ENCODE measurements at regions of chr10 and their contacts with region 1.

Region 1: GRCh38 chr10:133394064-133394663 is at the start of gene MTG1:
- DNase-seq: peak; percentile 96
- H3K4me3 Mint-ChIP-seq: peak within 1 kb of the TSS; percentile 99
- H3K27ac Mint-ChIP-seq: peak within 1 kb of the TSS; percentile 98
- H3K4me1 Mint-ChIP-seq: peaks cover 28% of the 10 kb centered on the region
- H3K27me3 Mint-ChIP-seq: no peaks in the 10 kb centered on the region
- total RNA-seq, gene MTG1: 64.9 and 67.9 TPM in 2 replicates

Region 2: GRCh38 chr10:133139551-133140065 is 254.6 kb before region 1 on chr10:
- intact Hi-C with region 1: no loop called
- DNase-seq: no peak
- H3K4me3 Mint-ChIP-seq: no peak overlapping the region
- H3K27ac Mint-ChIP-seq: no peak overlapping the region
- H3K4me1 Mint-ChIP-seq: peaks cover 8% of the 10 kb centered on the region
- H3K27me3 Mint-ChIP-seq: no peaks in the 10 kb centered on the region

Region 3: GRCh38 chr10:133261726-133262325 is 132.3 kb before region 1 on chr10:
- intact Hi-C with region 1: loop called (anchors 1 kb)
- DNase-seq: peak; percentile 76
- H3K4me3 Mint-ChIP-seq: peak overlapping the region; percentile 65
- H3K27ac Mint-ChIP-seq: peak overlapping the region; percentile 48
- H3K4me1 Mint-ChIP-seq: peaks cover 56% of the 10 kb centered on the region
- H3K27me3 Mint-ChIP-seq: peaks cover 5% of the 10 kb centered on the region

Region 4: GRCh38 chr10:133278577-133279265 is 115.4 kb before region 1 on chr10:
- intact Hi-C with region 1: loop called (anchors 2 kb)
- DNase-seq: peak; percentile 63
- H3K4me3 Mint-ChIP-seq: peak overlapping the region; percentile 87
- H3K27ac Mint-ChIP-seq: peak overlapping the region; percentile 86
- H3K4me1 Mint-ChIP-seq: peaks cover 14% of the 10 kb centered on the region
- H3K27me3 Mint-ChIP-seq: no peaks in the 10 kb centered on the region

Region 5: GRCh38 chr10:133329491-133330202 is 64.5 kb before region 1 on chr10:
- intact Hi-C with region 1: loop called (anchors 2 kb)
- DNase-seq: peak; percentile 77
- H3K4me3 Mint-ChIP-seq: peak overlapping the region; percentile 64
- H3K27ac Mint-ChIP-seq: no peak overlapping the region
- H3K4me1 Mint-ChIP-seq: peaks cover 3% of the 10 kb centered on the region
- H3K27me3 Mint-ChIP-seq: peaks cover 72% of the 10 kb centered on the region

Region 6: DNA sequence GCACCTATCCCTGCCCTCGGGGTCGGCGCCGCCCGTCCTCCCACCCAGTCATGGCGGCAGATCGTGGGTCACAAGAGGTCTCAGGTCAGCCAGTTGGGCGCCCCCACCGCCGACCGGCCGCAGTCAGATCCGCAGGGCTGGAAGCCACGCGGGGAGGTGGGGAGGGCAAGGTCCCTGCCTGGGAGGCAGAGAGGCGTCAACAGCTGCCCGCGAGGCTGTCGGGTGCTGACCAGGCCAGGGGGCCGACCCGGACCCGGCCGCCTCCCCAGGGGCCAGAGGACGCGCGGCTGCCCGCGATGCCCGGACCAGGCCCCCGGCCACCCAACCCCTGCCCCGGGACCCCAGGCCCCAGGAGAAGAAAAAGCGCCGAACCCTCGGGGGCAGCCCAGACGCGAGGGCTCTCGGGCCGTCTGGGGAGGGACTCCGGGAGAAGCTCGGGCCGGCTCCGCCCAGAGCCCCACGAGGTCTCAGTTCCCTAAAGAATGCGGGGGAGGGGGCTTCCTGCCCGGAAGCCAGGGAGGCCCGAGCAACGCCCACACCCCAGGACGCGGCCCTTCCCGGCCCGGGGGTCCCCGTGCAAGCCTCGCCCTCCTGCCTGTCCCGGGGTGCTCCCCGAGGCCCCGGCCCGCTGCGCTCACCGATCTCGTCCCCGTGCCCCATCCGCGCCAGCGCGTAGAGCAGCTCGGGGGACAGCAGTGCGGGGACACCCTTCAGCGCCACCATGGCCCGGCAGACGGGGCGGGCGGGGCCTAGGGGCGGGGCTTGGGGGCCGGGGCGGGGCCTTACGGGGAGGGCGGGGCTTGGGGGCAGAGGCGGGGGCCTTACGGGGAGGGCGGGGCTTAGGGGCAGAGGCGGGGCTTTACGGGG is 36.6 kb before region 1 on chr10 and contains the start of gene FUOM:
- intact Hi-C with region 1: loop called (anchors 1 kb)
- DNase-seq: peak; percentile 57
- H3K4me3 Mint-ChIP-seq: peak within 1 kb of the TSS; percentile 77
- H3K27ac Mint-ChIP-seq: peak within 1 kb of the TSS; percentile 48
- H3K4me1 Mint-ChIP-seq: no peaks in the 10 kb centered on the region
- H3K27me3 Mint-ChIP-seq: no peaks in the 10 kb centered on the region
- total RNA-seq, gene FUOM: 45.4 and 51.8 TPM in 2 replicates

Region 7: GRCh38 chr10:133373104-133373624 is 21.0 kb before region 1 on chr10 and contains the start of gene ECHS1:
- intact Hi-C with region 1: loop called (anchors 1 kb)
- DNase-seq: peak; percentile 95
- H3K4me3 Mint-ChIP-seq: peak within 1 kb of the TSS; percentile 91
- H3K27ac Mint-ChIP-seq: peak within 1 kb of the TSS; percentile 84
- H3K4me1 Mint-ChIP-seq: peaks cover 5% of the 10 kb centered on the region
- H3K27me3 Mint-ChIP-seq: peaks cover 16% of the 10 kb centered on the region
- total RNA-seq, gene ECHS1: 69.3 and 69.6 TPM in 2 replicates

Region 8: DNA sequence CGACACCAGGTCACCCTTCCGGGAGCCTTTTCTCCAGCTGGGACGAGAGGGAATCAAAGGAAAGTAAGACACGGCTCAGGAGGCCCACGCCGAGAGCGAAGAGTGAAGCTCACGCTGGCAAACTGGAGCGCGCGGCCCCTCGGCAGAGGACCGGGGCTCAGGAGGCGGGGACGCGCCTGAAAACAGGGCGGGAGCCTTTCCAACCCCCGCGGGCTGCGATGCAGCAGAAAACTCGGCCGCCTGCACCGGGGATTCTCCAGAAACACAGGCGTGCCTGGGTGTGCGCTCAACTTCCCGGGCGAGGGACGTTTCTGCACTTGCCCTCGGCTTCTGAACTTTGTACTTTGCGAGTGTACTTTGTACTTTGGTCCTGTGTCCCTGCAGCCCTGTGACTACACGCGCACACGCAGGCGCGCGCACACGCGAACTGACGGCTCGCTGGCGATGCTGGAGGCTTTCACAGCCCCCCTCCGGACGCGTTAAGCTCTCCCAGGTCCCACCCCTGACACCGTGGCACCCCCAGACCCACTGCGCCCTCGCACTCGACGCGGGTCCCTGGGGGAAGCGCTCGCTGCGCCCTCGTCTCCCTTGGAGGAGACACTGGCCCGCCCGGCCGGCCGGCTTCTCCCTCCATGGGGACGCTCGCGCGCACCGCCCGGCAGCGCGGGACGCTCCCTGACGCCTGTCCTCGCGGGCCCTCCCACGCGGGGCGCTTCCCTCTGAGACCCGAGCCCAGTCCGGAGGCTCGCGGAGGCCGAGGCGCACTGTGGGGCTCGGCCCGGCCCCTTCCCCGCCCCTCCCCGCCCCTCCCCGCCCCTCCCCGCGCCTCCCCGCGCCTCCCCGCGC is 15.7 kb before region 1 on chr10:
- intact Hi-C with region 1: loop called (anchors 1 kb)
- DNase-seq: peak; percentile 51
- H3K4me3 Mint-ChIP-seq: peak overlapping the region; percentile 79
- H3K27ac Mint-ChIP-seq: peak overlapping the region; percentile 44
- H3K4me1 Mint-ChIP-seq: peaks cover 11% of the 10 kb centered on the region
- H3K27me3 Mint-ChIP-seq: peaks cover 16% of the 10 kb centered on the region